Caco-2 (cell line): ENCODE measurements at regions of chr14 and their contacts with region 1.

Region 1: DNA sequence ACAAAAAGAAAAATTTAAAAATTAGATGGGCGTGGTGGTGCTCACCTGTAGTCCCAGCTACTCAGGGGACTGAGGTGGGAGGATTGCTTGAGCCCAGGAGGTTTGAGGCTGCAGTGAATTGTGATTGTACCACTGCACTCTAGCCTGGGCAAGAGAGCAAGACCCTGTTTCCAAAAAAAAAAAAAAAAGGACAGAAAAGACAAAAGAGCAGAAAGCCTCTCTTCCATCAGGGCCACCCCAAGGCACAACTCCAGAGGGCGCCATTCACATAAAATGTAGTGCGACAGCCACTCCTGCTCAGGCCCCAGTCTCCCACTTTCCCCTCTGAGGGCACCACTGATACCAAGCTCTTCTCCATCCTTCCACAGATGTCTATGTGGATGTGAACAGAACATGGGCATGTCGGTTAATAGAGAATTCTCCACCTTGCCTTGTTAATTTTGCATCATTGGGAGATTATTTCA is 41.8 kb downstream of the DGLUCY start:
- DNase-seq: no peak
- H3K4me3 ChIP-seq: no peak overlapping the region
- H3K4me3 Mint-ChIP-seq: no peak overlapping the region
- H3K27ac Mint-ChIP-seq: peak overlapping the region; percentile 94
- H3K4me1 ChIP-seq: peaks cover 61% of the 10 kb centered on the region
- H3K4me1 Mint-ChIP-seq: peaks cover 44% of the 10 kb centered on the region
- H3K27me3 ChIP-seq: no peaks in the 10 kb centered on the region
- H3K27me3 Mint-ChIP-seq: no peaks in the 10 kb centered on the region
- CTCF ChIP-seq: no peak

Region 2: GRCh38 chr14:90911121-90911520 is 244.5 kb before region 1 on chr14:
- CTCF ChIA-PET with region 1: no interaction called
- POLR2A ChIA-PET with region 1: no interaction called
- intact Hi-C with region 1: no loop called
- DNase-seq: no peak
- H3K4me3 ChIP-seq: no peak overlapping the region
- H3K4me3 Mint-ChIP-seq: no peak overlapping the region
- H3K27ac Mint-ChIP-seq: no peak overlapping the region
- H3K4me1 ChIP-seq: no peaks in the 10 kb centered on the region
- H3K4me1 Mint-ChIP-seq: no peaks in the 10 kb centered on the region
- H3K27me3 ChIP-seq: no peaks in the 10 kb centered on the region
- H3K27me3 Mint-ChIP-seq: no peaks in the 10 kb centered on the region
- CTCF ChIP-seq: no peak

Region 3: DNA sequence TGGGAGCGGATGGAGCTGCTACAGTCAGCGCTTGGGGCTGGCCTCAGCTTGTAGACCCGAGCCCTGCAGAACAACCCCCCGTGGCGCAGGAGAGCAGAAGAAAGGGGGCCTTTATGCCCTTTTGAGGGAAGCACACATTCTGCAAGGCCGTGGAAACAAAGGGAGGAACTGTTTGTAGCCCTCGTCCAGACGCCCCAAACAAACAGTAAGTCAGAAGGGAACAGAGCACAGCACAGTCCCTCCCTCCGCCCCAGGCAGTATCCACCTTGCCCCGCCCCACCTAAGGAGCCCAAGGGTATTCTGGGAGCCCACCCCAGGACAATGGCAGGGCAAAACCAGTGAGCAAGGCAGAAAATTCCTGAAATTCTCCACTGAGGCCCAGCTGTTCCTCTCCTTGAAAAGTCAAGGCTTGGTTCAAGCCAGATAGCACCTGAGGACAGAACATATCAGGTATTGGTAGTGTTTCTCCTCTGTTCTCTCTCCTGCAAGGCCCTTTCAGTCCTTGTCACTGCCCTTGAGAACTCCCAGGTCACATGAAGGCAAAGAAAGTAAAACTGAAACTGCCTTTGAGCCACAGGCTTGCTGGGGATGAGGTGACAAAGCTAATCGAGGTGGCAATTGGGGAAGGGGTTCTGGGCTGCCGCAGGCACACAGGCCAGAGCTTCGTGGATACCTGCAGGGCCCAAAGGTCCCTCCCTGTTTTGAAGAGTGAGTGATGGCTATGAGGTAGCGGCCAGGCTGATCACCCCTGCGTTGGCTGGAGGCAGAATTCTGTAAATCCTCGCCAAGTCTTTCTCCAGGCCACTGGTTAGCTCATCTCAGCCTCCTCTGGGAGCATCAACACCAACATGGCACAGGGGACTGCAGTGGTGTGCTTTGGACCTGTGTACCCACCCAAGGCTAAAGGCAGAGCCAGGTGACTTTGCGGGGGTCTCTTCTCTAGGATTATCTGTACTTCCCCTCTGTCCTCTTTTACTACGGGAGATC is 41.3 kb before region 1 on chr14:
- CTCF ChIA-PET with region 1: no interaction called
- POLR2A ChIA-PET with region 1: no interaction called
- intact Hi-C with region 1: loop called (anchors 2 kb)
- DNase-seq: peak; percentile 87 to 89
- H3K4me3 ChIP-seq: peak overlapping the region; percentile 64
- H3K4me3 Mint-ChIP-seq: peak overlapping the region; percentile 84
- H3K27ac Mint-ChIP-seq: peak overlapping the region; percentile 84
- H3K4me1 ChIP-seq: peaks cover 9% of the 10 kb centered on the region
- H3K4me1 Mint-ChIP-seq: peaks cover 5% of the 10 kb centered on the region
- H3K27me3 ChIP-seq: no peaks in the 10 kb centered on the region
- H3K27me3 Mint-ChIP-seq: no peaks in the 10 kb centered on the region
- CTCF ChIP-seq: no peak

Region 4: GRCh38 chr14:91286530-91286937 is 130.9 kb after region 1 on chr14:
- CTCF ChIA-PET with region 1: no interaction called
- POLR2A ChIA-PET with region 1: no interaction called
- intact Hi-C with region 1: no loop called
- DNase-seq: peak; percentile 55 to 74
- H3K4me3 ChIP-seq: no peak overlapping the region
- H3K4me3 Mint-ChIP-seq: no peak overlapping the region
- H3K27ac Mint-ChIP-seq: no peak overlapping the region
- H3K4me1 ChIP-seq: no peaks in the 10 kb centered on the region
- H3K4me1 Mint-ChIP-seq: no peaks in the 10 kb centered on the region
- H3K27me3 ChIP-seq: no peaks in the 10 kb centered on the region
- H3K27me3 Mint-ChIP-seq: no peaks in the 10 kb centered on the region
- CTCF ChIP-seq: peak; percentile 76 to 79